Activated CD8-positive, alpha-beta T cell treated with anti-CD3 and anti-CD28 coated beads for 36 hours (primary cell): ENCODE measurements at regions of chr15 and their contacts with region 1.

Region 1: DNA sequence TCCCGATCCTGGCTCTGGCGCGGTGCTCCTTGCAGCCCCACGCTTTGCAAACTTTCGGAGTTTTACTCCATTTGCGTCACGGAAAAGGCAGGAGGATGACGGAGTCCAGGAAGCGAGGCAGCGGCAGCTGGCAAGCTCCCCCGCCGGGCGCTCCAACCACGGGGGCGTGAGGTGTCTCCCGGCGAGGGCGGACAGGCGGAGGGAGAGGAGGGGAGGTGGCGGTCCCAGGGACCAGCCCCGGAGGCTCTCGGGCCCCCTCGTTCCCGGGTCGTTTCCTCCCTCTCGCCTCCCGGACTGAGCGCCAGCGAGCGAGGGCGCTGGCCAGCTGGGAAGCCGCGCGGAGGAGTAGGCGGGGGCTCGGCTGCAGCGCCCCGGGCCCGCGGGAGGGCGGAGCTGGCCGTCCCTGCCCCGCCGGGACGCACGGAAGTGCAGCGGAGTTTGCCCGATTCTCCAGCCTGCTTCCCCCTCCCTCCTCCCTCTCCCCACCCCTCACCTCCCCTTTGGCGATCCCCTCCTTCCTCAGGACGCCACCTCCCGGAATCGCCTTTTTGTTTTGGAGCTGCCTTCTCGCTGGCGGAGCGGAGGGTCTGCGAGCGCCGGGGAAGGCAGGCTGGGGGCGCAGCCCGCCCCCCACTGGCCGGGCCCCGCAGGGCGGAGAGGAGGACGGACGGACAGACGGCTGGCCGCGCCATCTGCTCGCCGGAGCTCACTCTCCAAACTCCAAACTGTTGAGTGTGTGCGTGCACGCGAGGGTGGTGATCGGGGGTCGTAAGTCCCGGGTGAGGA is at the start of gene SNX33:
- DNase-seq: peak; percentile 75
- ATAC-seq: peak; percentile 56
- H3K4me3 Mint-ChIP-seq: peak within 1 kb of the TSS; percentile 79
- H3K27ac Mint-ChIP-seq: peak within 1 kb of the TSS; percentile 60
- H3K4me1 Mint-ChIP-seq: peaks cover 20% of the 10 kb centered on the region
- H3K27me3 Mint-ChIP-seq: no peaks in the 10 kb centered on the region
- CTCF ChIP-seq: peak; percentile 28
- total RNA-seq, gene SNX33: 1.7 to 1.8 TPM

Region 2: DNA sequence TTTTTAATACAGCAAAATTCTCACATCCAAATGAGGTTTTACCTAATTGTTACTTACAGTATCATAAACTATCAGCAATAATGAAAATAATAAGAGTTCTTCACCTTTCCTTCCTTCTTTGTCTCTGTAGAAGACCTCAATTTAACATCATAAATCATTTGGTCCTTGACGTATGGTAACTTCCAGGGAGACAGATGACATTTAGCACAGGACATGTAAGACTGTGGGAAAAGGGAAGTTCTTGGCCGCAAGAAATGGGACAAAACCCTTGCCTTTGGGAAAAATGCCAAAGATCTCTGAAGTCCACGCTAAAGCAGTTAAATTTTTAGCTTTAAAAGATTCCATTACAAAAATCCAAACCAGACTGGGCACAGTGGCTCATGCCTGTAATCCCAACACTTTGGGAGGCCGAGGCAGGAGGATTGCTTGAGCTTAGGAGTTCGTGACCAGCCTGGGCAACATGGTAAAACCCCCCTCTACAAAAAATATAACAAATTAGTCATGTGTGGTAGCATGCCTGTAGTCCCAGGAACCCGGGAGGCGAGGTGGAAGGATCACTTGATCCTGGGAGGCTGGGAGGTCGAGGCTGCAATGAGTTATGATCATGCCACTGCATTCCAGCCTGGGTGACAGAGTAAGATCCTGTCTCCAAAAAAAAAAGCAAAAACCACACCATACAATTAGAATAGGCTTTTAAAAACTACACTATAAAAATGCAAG is 77.3 kb before region 1 on chr15:
- CTCF ChIA-PET with region 1: no interaction called
- POLR2A ChIA-PET with region 1: no interaction called
- intact Hi-C with region 1: no loop called
- DNase-seq: no peak
- ATAC-seq: no peak
- H3K4me3 Mint-ChIP-seq: no peak overlapping the region
- H3K27ac Mint-ChIP-seq: no peak overlapping the region
- H3K4me1 Mint-ChIP-seq: peaks cover 14% of the 10 kb centered on the region
- H3K27me3 Mint-ChIP-seq: no peaks in the 10 kb centered on the region
- CTCF ChIP-seq: no peak

Region 3: GRCh38 chr15:75625542-75626347 is 21.8 kb before region 1 on chr15 and contains the start of gene SNUPN:
- CTCF ChIA-PET with region 1: interaction called, 7 read pairs
- POLR2A ChIA-PET with region 1: interaction called, 10 read pairs
- intact Hi-C with region 1: no loop called
- DNase-seq: peak; percentile 97
- ATAC-seq: peak; percentile 91
- H3K4me3 Mint-ChIP-seq: peak within 1 kb of the TSS; percentile 94
- H3K27ac Mint-ChIP-seq: peak within 1 kb of the TSS; percentile 98
- H3K4me1 Mint-ChIP-seq: peaks cover 36% of the 10 kb centered on the region
- H3K27me3 Mint-ChIP-seq: no peaks in the 10 kb centered on the region
- CTCF ChIP-seq: no peak
- total RNA-seq, gene SNUPN: 28.2 to 28.5 TPM

Region 4: GRCh38 chr15:75694241-75695182 is 46.9 kb after region 1 on chr15:
- CTCF ChIA-PET with region 1: no interaction called
- POLR2A ChIA-PET with region 1: no interaction called
- intact Hi-C with region 1: no loop called
- DNase-seq: peak; percentile 49
- ATAC-seq: no peak
- H3K4me3 Mint-ChIP-seq: no peak overlapping the region
- H3K27ac Mint-ChIP-seq: no peak overlapping the region
- H3K4me1 Mint-ChIP-seq: peaks cover 16% of the 10 kb centered on the region
- H3K27me3 Mint-ChIP-seq: peaks cover 7% of the 10 kb centered on the region
- CTCF ChIP-seq: peak; percentile 47

Region 5: DNA sequence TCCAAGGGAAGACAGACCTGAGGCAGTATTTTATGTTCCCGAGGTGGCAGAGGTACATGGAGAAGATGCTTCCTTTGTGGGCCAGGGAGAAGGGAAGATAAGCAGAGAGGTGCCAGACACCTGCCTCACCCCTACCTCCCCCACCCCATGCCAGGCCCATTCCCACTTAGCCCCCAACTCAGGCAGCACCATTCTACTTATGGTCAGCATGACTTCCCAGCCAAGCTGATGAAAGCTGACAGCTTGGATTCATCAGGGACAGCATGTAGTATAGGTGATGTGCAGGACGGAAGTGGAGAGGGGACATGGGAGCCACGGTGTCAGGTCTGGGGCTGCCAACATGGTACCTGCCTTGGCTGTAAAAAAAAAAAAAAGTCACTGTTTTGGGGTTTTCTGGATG is 122.6 kb after region 1 on chr15:
- CTCF ChIA-PET with region 1: no interaction called
- POLR2A ChIA-PET with region 1: no interaction called
- intact Hi-C with region 1: no loop called
- DNase-seq: no peak
- ATAC-seq: no peak
- H3K4me3 Mint-ChIP-seq: no peak overlapping the region
- H3K27ac Mint-ChIP-seq: no peak overlapping the region
- H3K4me1 Mint-ChIP-seq: no peaks in the 10 kb centered on the region
- H3K27me3 Mint-ChIP-seq: no peaks in the 10 kb centered on the region
- CTCF ChIP-seq: no peak